Pancreas (tissue), 10 donors: ENCODE measurements at regions of chr7 and their contacts with region 1.

Region 1: GRCh38 chr7:16564909-16565426 is 38.3 kb downstream of the LRRC72 start:
- DNase-seq: no peak
- ATAC-seq: peak; percentile 80 to 95 (median 90)
- H3K4me3 ChIP-seq: no peak overlapping the region
- H3K27ac ChIP-seq: no peak overlapping the region
- H3K4me1 ChIP-seq: no peaks in the 10 kb centered on the region
- H3K27me3 ChIP-seq: no peaks in the 10 kb centered on the region
- CTCF ChIP-seq: peak; percentile 46 to 66 (median 63)

Region 2: GRCh38 chr7:16078076-16078952 is 486.7 kb before region 1 on chr7:
- intact Hi-C with region 1: loop called in 1 of 3 experiments (anchors 5 kb)
- DNase-seq: peak in 3 of 6 donors; percentile 14 to 20 (median 18)
- ATAC-seq: peak; percentile 67 to 91 (median 84)
- H3K4me3 ChIP-seq: no peak overlapping the region
- H3K27ac ChIP-seq: no peak overlapping the region
- H3K4me1 ChIP-seq: no peaks in the 10 kb centered on the region
- H3K27me3 ChIP-seq: no peaks in the 10 kb centered on the region
- CTCF ChIP-seq: peak; percentile 22 to 59 (median 34)

Region 3: DNA sequence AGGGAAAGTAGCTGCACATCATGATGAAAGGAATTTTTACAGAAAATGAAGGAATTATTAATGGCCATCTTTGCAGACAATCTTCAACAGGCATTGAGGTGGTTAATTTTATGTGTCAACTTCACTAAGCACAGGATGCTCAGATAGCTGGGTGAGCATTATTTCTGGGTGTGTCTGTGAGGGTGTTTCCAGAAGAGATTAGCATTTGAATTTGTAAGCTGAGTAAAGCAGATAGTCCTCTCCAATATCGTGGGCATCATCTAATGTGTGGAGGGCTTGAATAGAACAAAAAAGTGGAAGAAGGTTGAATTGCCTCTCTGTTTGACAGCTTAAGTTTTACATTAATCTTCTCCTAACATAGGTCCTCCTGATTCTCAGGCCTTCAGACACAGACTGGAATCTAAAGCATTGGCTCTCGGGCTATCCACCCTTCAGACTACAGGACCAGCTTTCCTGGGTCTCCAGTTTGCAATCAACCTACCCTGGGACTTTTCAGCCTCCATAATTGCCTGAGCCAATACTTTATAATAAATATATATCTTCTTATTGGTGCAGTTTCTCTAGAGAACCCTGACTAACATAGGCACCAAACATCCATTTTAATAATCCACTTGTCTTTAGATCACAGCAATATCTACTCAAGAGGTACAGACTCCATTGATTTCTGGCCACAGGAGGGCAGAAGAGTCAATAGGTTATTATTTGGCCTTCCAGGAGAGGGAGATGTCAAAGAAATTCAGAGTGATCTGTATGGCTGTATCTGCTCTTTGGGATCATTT is 133.1 kb before region 1 on chr7:
- intact Hi-C with region 1: loop called in 1 of 3 experiments (anchors 10 kb)
- DNase-seq: peak in 1 of 6 donors; percentile 34
- ATAC-seq: peak; percentile 75 to 90 (median 88)
- H3K4me3 ChIP-seq: no peak overlapping the region
- H3K27ac ChIP-seq: no peak overlapping the region
- H3K4me1 ChIP-seq: no peaks in the 10 kb centered on the region
- H3K27me3 ChIP-seq: no peaks in the 10 kb centered on the region
- CTCF ChIP-seq: peak in 3 of 4 donors; percentile 19 to 35 (median 32)